AG04450 (cell line): ENCODE measurements at regions of chr11 and their contacts with region 1.

Region 1: GRCh38 chr11:47248664-47249377 is at the start of gene ACP2:
- DNase-seq: peak; percentile 72
- H3K4me3 ChIP-seq: peak within 1 kb of the TSS; percentile 97
- H3K27ac ChIP-seq: peak within 1 kb of the TSS; percentile 77
- H3K27me3 ChIP-seq: no peaks in the 10 kb centered on the region
- CTCF ChIP-seq: peak; percentile 41
- polyA plus RNA-seq, gene ACP2: 20.8 and 25.1 TPM in 2 replicates

Region 2: DNA sequence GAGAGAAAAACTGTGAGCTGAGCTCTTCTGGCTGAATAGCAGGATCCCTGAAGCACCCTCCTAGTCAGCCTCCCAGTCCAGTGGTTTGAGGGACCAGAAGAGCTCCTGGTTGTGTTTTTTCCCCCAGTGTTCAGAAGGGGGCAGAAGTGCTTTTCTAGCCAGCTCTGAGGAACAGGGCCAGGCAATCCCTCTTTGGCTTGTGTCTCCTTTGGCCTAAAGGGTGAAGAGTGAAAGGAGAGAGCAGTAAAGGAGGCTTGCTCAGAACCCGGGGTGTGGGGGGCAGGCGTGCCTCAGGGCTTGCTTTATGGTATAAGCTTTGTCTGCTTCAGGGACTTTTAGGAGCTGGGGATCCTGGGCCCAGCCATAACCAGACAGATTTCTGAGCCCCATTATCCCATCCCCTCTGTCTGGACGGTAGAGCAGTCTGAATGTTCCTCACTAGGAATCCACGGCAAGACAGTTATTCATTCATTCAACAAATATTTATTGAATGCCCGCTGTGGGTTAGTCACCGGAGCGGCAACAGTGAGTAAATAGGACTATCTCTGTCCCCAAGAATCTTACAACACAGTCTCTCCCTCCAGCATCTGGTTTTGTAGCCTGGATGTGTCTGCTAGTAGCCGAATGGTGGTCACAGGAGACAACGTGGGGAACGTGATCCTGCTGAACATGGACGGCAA is 14.7 kb before region 1 on chr11:
- CTCF ChIA-PET with region 1: interaction called, 11 read pairs
- POLR2A ChIA-PET with region 1: interaction called, 9 read pairs
- DNase-seq: no peak
- H3K4me3 ChIP-seq: no peak overlapping the region
- H3K27ac ChIP-seq: no peak overlapping the region
- H3K27me3 ChIP-seq: no peaks in the 10 kb centered on the region
- CTCF ChIP-seq: peak; percentile 48

Region 3: DNA sequence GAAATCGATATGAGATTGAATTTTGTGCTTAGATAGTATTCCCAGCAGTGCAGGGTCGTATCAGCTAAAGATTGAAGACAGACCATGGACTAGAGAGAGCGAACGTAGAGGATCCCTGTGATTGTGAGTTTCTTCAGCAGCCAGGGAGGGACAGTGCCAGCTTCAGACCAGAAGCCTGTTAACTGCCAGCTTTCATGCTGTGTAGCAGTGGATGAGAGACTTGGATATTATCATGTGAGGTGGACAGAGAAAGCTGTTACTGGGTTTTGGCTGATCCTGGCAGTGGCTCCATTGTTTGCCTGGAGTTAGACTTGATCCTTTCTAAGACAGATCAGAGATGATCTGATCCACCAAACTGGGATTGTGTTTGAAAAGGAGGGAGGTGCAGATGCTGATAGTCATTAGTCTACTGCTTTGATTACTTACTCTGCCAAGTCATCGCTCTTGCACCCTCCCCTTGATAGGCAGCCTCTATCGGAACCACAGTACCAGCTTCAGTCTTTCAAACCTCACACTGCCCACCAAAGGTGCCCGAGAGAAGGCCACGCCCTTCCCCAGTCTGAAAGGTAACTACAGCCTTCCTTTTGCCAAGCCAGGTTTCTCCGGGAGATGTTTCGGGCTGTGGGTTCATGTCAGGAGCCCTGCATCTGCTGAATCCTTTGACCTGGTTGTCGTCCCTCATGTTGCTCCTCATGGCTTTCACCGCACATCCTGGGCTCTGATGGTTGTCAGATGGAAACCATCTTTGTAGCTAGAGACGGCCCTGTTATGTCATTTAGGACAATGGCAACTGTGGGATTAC is 37.3 kb after region 1 on chr11:
- CTCF ChIA-PET with region 1: no interaction called
- POLR2A ChIA-PET with region 1: no interaction called
- DNase-seq: no peak
- H3K4me3 ChIP-seq: no peak overlapping the region
- H3K27ac ChIP-seq: no peak overlapping the region
- H3K27me3 ChIP-seq: no peaks in the 10 kb centered on the region
- CTCF ChIP-seq: no peak